Gastrocnemius medialis (tissue), 4 donors: ENCODE measurements at regions of chr22 and their contacts with region 1.

Region 1: DNA sequence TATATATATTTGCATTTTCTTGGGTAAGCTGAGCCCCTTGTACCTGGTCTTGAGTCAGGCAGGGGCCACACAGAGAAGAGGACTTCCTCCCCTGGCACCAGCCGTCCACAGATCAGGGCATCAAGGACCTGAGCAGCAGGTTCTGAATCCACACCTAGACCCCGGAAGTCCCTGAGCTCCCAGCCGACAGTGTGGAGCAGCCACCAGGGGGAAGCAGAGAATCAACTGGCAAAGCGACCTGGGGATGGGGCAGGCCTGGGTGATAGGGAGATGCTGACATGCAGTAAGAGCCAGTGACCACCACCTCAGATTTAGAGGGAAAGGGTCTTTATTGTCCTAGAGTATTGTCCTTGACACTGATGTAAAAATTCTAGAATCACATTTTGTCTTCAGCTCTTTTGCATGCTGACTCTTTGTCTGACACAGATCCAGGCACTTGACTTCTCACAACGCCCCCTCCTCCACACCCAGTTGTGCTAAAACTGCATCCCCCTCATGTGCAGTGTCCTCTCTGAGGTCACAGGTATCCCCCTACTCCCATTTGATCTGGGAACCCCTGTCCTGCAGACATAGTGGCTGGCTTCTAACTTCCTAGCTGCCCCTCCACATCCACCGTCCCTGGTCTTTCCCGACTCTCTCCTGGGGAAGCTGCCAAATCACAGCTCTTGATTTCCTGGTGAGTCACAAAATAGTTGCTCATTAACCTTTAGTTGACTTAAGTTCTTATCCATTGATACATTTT is 109.3 kb downstream of the GGTLC2 start:
- DNase-seq: no peak
- ATAC-seq: no peak
- H3K4me3 ChIP-seq: no peak overlapping the region
- H3K27ac ChIP-seq: no peak overlapping the region
- H3K4me1 ChIP-seq: no peaks in the 10 kb centered on the region
- H3K27me3 ChIP-seq: peaks cover 0 to 6% (median 0%) of the 10 kb centered on the region in 3 donors
- CTCF ChIP-seq: no peak
- POLR2A ChIP-seq: no peak

Region 2: DNA sequence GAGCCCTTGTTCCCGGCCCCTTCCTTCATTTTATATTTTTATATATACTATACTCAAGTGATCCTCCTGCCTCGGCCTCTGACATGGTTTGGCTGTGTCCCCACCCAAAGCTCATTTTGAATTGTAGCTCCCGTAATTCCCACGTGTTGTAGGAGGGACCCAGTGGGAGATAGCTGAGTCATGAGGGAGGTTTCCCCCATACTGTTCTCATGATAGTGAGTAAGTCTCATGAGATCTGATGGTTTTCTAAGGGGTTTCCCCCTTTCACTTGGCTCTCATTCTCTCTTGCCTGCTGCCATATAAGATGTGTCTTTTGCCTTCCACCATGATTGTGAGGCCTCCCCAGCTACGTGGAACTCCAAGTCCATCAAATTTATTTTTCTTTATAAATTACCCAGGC is 226.4 kb before region 1 on chr22:
- in situ Hi-C with region 1: no loop called
- intact Hi-C with region 1: no loop called
- DNase-seq: no peak
- ATAC-seq: no peak
- H3K4me3 ChIP-seq: no peak overlapping the region
- H3K27ac ChIP-seq: no peak overlapping the region
- H3K4me1 ChIP-seq: no peaks in the 10 kb centered on the region
- H3K27me3 ChIP-seq: peaks cover 0 to 2% (median 0%) of the 10 kb centered on the region in 3 donors
- CTCF ChIP-seq: no peak
- POLR2A ChIP-seq: no peak

Region 3: GRCh38 chr22:22692707-22693530 is 60.8 kb before region 1 on chr22:
- in situ Hi-C with region 1: loop called in 1 of 4 experiments (anchors 10 kb)
- intact Hi-C with region 1: no loop called
- DNase-seq: no peak
- ATAC-seq: no peak
- H3K4me3 ChIP-seq: no peak overlapping the region
- H3K27ac ChIP-seq: no peak overlapping the region
- H3K4me1 ChIP-seq: no peaks in the 10 kb centered on the region
- H3K27me3 ChIP-seq: no peaks in the 10 kb centered on the region
- CTCF ChIP-seq: no peak
- POLR2A ChIP-seq: no peak

Region 4: DNA sequence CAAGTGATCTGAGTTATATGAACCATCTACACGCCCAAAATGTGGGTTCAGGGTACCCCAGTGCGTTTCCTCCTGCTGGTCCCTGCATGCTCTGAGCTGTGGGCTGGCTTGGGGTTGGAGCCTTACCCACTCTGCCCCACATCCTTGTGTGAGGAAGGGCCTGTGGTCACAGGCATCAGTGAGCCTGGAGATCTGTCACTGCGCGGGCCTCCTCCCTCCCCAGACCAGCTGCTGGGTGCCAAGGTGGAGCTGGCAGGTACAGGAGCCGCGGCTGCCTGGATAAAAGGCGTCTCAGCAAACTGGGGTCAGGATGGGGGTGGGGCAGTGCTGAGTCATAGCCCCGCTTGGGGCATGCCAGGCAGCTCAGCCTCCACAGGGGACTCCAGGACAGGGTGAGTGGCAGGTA is 334.5 kb after region 1 on chr22:
- in situ Hi-C with region 1: no loop called
- intact Hi-C with region 1: no loop called
- DNase-seq: peak in 1 of 2 donors; percentile 34
- ATAC-seq: peak in 1 of 2 donors; percentile 16
- H3K4me3 ChIP-seq: no peak overlapping the region
- H3K27ac ChIP-seq: no peak overlapping the region
- H3K4me1 ChIP-seq: peaks cover 0 to 5% of the 10 kb centered on the region in 2 donors
- H3K27me3 ChIP-seq: no peaks in the 10 kb centered on the region
- CTCF ChIP-seq: no peak
- POLR2A ChIP-seq: no peak